Aorta (tissue), 5 donors: ENCODE measurements at regions of chr11 and their contacts with region 1.

Region 1: GRCh38 chr11:2532704-2533586 is 88.1 kb downstream of the KCNQ1 start:
- DNase-seq: peak; percentile 94 to 98
- ATAC-seq: peak; percentile 91
- H3K4me3 ChIP-seq: no peak overlapping the region
- H3K27ac ChIP-seq: no peak overlapping the region
- H3K4me1 ChIP-seq: no peaks in the 10 kb centered on the region
- H3K27me3 ChIP-seq: no peaks in the 10 kb centered on the region

Region 2: DNA sequence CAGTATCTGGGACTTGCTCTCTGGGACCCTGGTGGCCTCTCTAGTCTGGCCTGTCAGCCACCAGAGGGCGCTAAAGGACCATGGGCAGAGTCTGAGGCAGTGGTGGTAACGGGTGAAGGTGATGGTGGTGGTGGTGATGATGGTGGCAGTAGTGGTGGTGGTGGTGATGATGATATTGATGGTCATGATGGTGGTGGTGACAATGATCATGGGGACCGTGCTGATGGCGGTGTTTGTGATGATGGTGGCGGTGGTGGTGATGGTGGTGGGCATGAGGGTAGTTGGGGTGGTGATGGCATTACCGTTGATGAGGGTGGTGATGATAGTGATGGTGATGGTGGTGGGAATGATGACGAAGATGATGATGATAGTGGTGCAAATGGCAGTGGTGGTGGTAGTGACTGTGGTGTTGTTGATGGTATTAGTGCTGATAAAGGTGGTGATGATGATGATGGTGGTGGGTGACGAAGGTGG is 104.6 kb before region 1 on chr11:
- intact Hi-C with region 1: loop called in 1 of 2 experiments (anchors 2 kb)
- DNase-seq: peak in 1 of 2 donors; percentile 80
- ATAC-seq: peak; percentile 55
- H3K4me3 ChIP-seq: no peak overlapping the region
- H3K27ac ChIP-seq: no peak overlapping the region
- H3K4me1 ChIP-seq: no peaks in the 10 kb centered on the region
- H3K27me3 ChIP-seq: no peaks in the 10 kb centered on the region

Region 3: GRCh38 chr11:2574551-2575535 is 41.9 kb after region 1 on chr11:
- intact Hi-C with region 1: no loop called
- DNase-seq: peak; percentile 44 to 57
- ATAC-seq: no peak
- H3K4me3 ChIP-seq: no peak overlapping the region
- H3K27ac ChIP-seq: no peak overlapping the region
- H3K4me1 ChIP-seq: no peaks in the 10 kb centered on the region
- H3K27me3 ChIP-seq: no peaks in the 10 kb centered on the region

Region 4: GRCh38 chr11:2666401-2666741 is 133.4 kb after region 1 on chr11:
- intact Hi-C with region 1: no loop called
- DNase-seq: no peak
- ATAC-seq: no peak
- H3K4me3 ChIP-seq: no peak overlapping the region
- H3K27ac ChIP-seq: no peak overlapping the region
- H3K4me1 ChIP-seq: no peaks in the 10 kb centered on the region
- H3K27me3 ChIP-seq: no peaks in the 10 kb centered on the region

Region 5: GRCh38 chr11:2691991-2692875 is 159.3 kb after region 1 on chr11:
- intact Hi-C with region 1: no loop called
- DNase-seq: peak in 1 of 2 donors; percentile 16
- ATAC-seq: no peak
- H3K4me3 ChIP-seq: no peak overlapping the region
- H3K27ac ChIP-seq: no peak overlapping the region
- H3K4me1 ChIP-seq: no peaks in the 10 kb centered on the region
- H3K27me3 ChIP-seq: no peaks in the 10 kb centered on the region